Breast epithelium (tissue), 4 donors: ENCODE measurements at regions of chr1 and their contacts with region 1.

Region 1: GRCh38 chr1:204431310-204432165 is 19.9 kb upstream of the PPP1R15B start:
- DNase-seq: peak; percentile 75 to 82
- H3K4me3 ChIP-seq: no peak overlapping the region
- H3K27ac ChIP-seq: peak overlapping the region in 1 of 2 donors; percentile 33
- H3K4me1 ChIP-seq: no peaks in the 10 kb centered on the region
- H3K27me3 ChIP-seq: no peaks in the 10 kb centered on the region
- CTCF ChIP-seq: peak; percentile 80 to 96 (median 85)
- POLR2A ChIP-seq: no peak

Region 2: DNA sequence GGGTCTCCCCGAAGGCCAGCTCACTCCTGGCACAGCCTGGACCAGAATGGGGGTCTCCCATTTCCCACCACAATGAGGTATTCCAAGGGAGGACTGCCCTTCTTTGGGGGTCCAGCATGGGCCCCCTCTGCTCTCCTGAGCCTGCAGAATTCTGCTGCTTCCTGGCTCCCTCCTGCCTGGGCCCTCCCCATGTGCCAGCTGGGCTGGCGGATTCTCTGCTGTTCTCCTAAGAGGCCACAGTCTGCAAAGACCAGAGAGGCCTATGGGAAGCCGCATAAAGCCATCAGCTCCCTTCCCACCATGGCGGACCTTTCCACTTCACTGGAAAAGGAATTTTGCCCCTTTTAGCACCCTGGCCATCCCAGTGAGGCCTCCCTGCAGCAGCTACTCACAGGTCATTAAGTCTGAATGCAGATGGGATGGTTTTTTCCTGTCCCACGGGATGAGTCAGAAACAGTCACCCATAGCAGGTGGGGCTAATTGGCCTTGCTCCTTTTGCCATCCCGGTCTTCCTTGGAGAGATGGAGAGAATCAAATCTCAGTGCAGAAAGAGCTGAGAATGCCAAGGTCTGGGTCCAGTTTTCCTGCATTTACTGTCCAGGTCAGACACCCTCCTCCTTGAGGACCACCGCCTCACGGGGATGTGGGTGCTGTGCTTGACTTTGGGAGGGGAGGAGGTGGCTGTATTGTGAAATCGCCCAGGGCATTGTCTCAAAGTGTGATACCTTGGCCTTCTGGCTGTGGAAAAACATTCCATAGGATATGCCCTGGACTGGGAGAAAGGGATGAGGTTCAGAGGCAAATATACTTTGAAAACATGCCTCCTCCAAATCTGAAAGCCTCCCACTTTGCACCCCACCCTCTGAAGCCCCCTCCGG is 1279.1 kb before region 1 on chr1:
- intact Hi-C with region 1: no loop called
- DNase-seq: no peak
- H3K4me3 ChIP-seq: no peak overlapping the region
- H3K27ac ChIP-seq: peak overlapping the region; percentile 86 to 92
- H3K4me1 ChIP-seq: peaks cover 0 to 8% of the 10 kb centered on the region in 2 donors
- H3K27me3 ChIP-seq: no peaks in the 10 kb centered on the region
- CTCF ChIP-seq: no peak
- POLR2A ChIP-seq: no peak

Region 3: DNA sequence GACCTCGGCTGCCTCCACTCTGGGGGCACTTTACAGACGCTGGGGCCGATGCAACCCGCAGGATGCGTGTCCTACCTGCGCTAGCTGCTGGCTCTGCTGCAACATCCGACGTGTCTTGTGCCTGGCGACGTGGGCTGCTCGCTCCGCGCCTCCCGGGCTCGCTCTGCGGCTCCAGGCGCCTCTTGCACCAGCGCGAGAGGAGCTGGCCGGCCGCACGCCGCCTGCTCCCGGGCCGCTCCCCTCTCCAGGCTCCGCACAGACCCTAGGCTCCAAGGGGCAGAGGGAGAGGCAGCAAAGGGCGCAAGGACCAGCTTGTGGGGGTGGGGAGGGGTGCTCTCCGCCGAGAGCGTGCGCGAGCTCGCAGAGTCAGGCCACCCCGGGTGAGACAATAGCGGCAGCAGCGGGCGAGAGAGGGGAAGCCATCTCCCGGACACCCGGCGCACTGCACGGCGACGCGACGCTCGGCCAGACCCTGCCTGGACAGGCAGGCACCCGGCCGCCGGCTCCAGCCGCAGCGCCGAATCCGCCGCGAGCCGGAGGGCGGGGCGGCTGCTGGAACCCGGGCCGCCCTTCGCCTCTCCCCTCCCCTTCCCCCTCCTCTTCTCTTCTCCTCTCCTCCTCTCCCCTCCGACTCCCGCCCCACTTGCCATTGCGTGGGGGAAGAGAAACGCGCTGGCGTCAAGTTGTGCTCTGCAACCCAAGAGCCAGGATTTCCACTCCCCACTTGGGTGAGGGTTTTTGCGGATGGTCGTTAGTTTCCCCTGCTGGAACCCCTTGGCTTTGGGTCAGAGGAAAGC is 62.9 kb after region 1 on chr1 and contains the start of gene PIK3C2B:
- intact Hi-C with region 1: loop called (anchors 5 kb)
- DNase-seq: peak; percentile 79 to 83
- H3K4me3 ChIP-seq: peak within 1 kb of the TSS; percentile 69 to 93 (median 80)
- H3K27ac ChIP-seq: peak within 1 kb of the TSS; percentile 86 to 93
- H3K4me1 ChIP-seq: peaks cover 7 to 12% of the 10 kb centered on the region in 2 donors
- H3K27me3 ChIP-seq: no peaks in the 10 kb centered on the region
- CTCF ChIP-seq: peak in 2 of 3 donors; percentile 57 to 72
- POLR2A ChIP-seq: no peak
- total RNA-seq, gene PIK3C2B: 17.6 to 31.5 (median 24.9) TPM